ENCODE measurements at regions of chr5 and their contacts with region 1.

Region 1: GRCh38 chr5:95646554-95647431 is at the start of gene RFESD:
- DNase-seq: peak; percentile 93 to 98 (median 96)
- H3K4me3 ChIP-seq: peak within 1 kb of the TSS; percentile 40 to 87 (median 72)
- H3K27ac ChIP-seq: peak within 1 kb of the TSS; percentile 61 to 98 (median 94)
- H3K27me3 ChIP-seq: no peaks in the 10 kb centered on the region
- CTCF ChIP-seq: peak in 47 of 56 donors; percentile 7 to 60 (median 35)
- total RNA-seq, gene RFESD: 1.0 to 7.7 (median 3.6) TPM

Region 2: GRCh38 chr5:95554647-95555548 is 91.9 kb before region 1 on chr5 and contains the starts of genes ARSK and SKIC3:
- intact Hi-C with region 1: loop called in 1 of 2 experiments (anchors 10 kb)
- DNase-seq: peak; percentile 90 to 98 (median 94)
- H3K4me3 ChIP-seq: peak within 1 kb of the TSS; percentile 61 to 100 (median 89)
- H3K27ac ChIP-seq: peak within 1 kb of the TSS; percentile 55 to 96 (median 86)
- H3K27me3 ChIP-seq: no peaks in the 10 kb centered on the region
- CTCF ChIP-seq: peak in 46 of 56 donors; percentile 4 to 55 (median 37)
- total RNA-seq, gene ARSK: 4.7 to 15.9 (median 8.7) TPM
- total RNA-seq, gene SKIC3: 75.4 to 149 (median 113) TPM

Region 3: GRCh38 chr5:95583992-95584391 is 62.8 kb before region 1 on chr5:
- intact Hi-C with region 1: no loop called
- DNase-seq: no peak
- H3K4me3 ChIP-seq: no peak overlapping the region
- H3K27ac ChIP-seq: no peak overlapping the region
- H3K27me3 ChIP-seq: no peaks in the 10 kb centered on the region
- CTCF ChIP-seq: no peak

Region 4: GRCh38 chr5:95781101-95781583 is 134.3 kb after region 1 on chr5:
- intact Hi-C with region 1: loop called in 1 of 2 experiments (anchors 5 kb)
- DNase-seq: peak; percentile 59 to 85 (median 77)
- H3K4me3 ChIP-seq: peak overlapping the region in 17 of 59 donors; percentile 3 to 43 (median 28)
- H3K27ac ChIP-seq: peak overlapping the region in 55 of 59 donors; percentile 1 to 83 (median 58)
- H3K27me3 ChIP-seq: no peaks in the 10 kb centered on the region
- CTCF ChIP-seq: peak; percentile 72 to 99 (median 92)

Region 5: GRCh38 chr5:95846554-95847260 is 199.9 kb after region 1 on chr5:
- intact Hi-C with region 1: loop called (anchors 2 kb)
- DNase-seq: peak in 8 of 10 donors; percentile 61 to 85 (median 78)
- H3K4me3 ChIP-seq: no peak overlapping the region
- H3K27ac ChIP-seq: peak overlapping the region in 29 of 59 donors; percentile 2 to 87 (median 33)
- H3K27me3 ChIP-seq: no peaks in the 10 kb centered on the region
- CTCF ChIP-seq: peak; percentile 95 to 100 (median 98)

Region 6: DNA sequence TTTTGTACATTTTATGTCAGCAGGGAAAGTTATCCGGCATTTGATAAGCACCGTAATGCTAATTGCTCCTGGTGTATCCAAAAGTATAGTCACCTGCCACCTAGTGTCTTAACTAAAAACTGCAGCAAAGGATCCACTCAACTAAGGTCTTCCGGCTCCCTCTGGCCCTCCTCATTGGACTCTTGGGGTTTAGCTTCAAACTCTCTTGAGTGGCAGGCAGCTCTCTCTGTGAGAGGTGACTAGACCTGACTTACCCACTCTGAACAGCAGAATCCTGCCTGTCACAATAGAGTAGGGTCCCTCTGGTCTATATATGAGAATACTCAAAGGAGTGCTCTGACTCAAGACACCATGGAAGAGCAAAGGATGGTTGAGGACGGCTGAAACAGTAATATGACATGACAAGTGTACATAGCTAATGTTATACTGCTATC is 955.0 kb after region 1 on chr5:
- intact Hi-C with region 1: loop called in 1 of 2 experiments (anchors 5 kb)
- DNase-seq: peak in 3 of 10 donors; percentile 12 to 44 (median 39)
- H3K4me3 ChIP-seq: peak overlapping the region in 20 of 59 donors; percentile 2 to 44 (median 24)
- H3K27ac ChIP-seq: no peak overlapping the region
- H3K27me3 ChIP-seq: no peaks in the 10 kb centered on the region
- CTCF ChIP-seq: peak; percentile 69 to 91 (median 82)